GM13976 (cell line): ENCODE measurements at regions of chr2 and their contacts with region 1.

Region 1: GRCh38 chr2:181104512-181105115 is 124.2 kb downstream of the UBE2E3 start:
- DNase-seq: no peak
- CTCF ChIP-seq: peak; percentile 61

Region 2: DNA sequence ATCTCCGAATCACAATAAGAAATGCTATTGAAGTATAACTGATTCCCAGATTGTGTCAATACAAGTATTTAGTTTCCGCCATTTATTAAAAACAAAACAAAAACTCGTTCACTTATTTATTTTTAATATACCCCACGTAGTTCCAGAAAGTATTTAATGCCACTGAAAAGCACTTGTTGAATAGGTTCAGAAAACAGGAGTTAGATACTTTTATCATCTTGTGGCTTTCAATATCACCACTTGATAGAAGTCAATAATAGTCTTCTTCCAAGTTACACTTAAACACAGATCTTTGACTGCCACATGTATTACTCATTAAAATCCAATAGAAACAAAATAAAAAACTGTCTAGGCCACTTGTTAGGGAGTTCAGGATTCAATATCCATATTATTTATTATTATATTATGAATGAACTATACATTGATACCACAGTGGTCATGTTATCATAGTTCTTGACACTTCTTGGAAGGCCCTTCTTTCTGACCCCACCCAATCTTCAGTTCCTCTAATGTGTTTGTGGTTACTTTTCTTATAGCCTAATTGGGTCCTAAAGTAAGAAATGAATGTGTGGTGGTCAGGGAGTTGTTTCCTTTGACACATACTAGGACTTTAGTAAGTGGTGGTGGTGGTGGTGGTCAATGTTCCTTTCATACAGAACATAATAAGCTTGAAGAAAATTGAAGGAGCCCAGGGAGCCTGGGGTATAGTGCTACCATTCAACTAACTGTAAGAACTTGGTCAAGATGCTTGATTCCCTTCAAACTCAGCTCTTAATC is 131.3 kb after region 1 on chr2:
- in situ Hi-C with region 1: loop called (anchors 10 kb)
- DNase-seq: peak; percentile 44
- CTCF ChIP-seq: no peak

Region 3: DNA sequence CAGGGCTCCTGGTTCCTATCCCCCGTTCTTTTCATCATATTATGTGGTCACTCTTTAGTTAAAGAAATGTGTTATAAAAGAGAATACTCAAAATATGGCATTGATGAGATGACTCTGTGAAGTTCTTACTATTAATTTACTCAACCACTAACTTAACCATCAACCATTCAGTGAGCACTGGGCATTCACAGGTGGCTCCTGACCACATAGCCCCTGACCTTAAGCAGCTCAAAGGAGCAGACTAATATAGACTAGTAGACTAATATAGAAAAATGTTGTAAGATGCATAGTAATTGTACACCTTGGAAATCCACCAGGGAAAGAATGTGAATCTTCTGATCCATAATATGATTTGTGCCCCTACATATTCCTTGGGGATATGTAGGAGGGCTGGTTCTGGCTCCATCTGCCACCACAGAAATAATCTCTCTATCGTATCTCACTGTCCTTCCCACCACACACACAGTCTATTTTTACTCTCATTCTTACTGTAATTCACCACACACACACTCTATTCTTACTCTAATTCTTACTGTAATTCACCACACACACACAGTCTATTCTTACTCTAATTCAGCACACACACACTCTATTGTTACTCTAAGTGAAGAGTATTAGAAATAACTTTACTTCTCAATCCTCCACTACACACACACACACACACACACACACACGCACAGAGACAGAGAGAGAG is 163.7 kb after region 1 on chr2:
- in situ Hi-C with region 1: no loop called
- DNase-seq: no peak
- CTCF ChIP-seq: no peak

Region 4: GRCh38 chr2:181305301-181306123 is 200.9 kb after region 1 on chr2:
- in situ Hi-C with region 1: loop called (anchors 10 kb)
- DNase-seq: no peak
- CTCF ChIP-seq: no peak

Region 5: GRCh38 chr2:181457121-181457740 is 352.6 kb after region 1 on chr2 and contains the start of gene ITGA4:
- in situ Hi-C with region 1: loop called (anchors 5 kb)
- DNase-seq: peak; percentile 87
- CTCF ChIP-seq: peak; percentile 95

Region 6: GRCh38 chr2:181607629-181608590 is 503.3 kb after region 1 on chr2:
- in situ Hi-C with region 1: no loop called
- DNase-seq: no peak
- CTCF ChIP-seq: no peak